ENCODE measurements at regions of chr5 and their contacts with region 1.

Region 1: DNA sequence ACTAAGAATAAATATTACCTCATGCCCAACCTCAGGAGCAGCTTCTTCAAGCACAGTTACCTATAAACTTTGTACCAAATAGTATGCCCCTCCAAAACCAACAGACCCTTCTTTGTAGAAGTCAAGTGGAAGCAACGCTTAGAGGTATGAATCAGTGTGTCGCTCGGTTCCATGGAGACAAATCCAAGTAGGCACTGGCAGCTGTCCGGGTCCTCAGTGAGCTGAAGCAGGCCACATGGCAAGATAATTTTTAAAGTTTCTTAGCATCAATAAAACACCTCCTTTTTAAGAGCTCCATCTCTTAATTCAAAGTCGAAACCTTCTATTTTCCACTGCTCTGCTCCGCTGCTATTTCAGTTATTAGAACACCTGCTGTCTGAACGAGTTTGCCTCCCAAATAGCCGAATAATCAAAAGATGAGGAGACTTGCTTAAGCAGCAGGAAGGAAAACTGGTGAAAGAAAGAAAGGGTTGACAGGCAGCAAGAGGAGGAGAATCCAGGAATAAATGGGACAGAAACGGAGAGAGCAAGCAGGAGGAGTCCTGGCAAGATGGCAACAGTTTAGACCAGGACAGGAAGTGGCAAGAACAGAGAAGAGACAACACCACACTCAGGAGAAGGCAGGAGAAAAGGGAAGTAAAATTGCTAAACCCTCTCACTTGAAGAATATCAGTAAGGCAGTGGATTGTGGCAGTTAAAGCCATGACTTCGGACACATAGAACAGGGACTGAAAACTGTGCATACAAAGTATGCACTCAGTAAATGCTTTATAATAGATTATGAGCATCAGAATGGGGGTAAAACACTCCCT is 65.0 kb downstream of the PPP2R2B start:
- DNase-seq: no peak
- H3K27ac ChIP-seq: no peak overlapping the region
- CTCF ChIP-seq: no peak

Region 2: DNA sequence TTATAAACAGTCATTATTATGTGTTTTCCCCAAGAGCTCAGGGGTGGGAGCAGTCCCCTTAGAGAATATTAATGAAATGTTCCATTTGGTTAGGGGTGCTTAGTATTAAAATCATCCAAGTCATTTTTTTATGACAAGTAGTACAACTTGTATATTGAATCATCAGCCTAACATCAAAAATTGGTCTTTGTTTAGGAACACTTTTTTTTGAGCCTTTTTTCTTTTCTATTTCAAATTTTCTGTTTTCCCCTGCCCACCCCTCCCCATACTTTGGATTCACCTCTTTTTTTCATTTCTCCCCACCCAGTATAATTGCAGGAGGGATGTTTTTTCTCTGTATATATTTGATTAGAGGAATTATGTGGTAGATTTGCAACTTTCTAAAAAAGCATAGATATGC is 584.3 kb before region 1 on chr5:
- CTCF ChIA-PET with region 1: interaction called, 11 read pairs
- POLR2A ChIA-PET with region 1: no interaction called
- DNase-seq: no peak
- H3K27ac ChIP-seq: no peak overlapping the region
- CTCF ChIP-seq: no peak

Region 3: GRCh38 chr5:146799671-146800070 is 13.9 kb before region 1 on chr5:
- CTCF ChIA-PET with region 1: no interaction called
- POLR2A ChIA-PET with region 1: interaction called, 10 read pairs
- DNase-seq: no peak
- H3K27ac ChIP-seq: no peak overlapping the region
- CTCF ChIP-seq: no peak

Region 4: GRCh38 chr5:146836226-146836842 is 22.8 kb after region 1 on chr5:
- CTCF ChIA-PET with region 1: no interaction called
- POLR2A ChIA-PET with region 1: no interaction called
- DNase-seq: no peak
- H3K27ac ChIP-seq: no peak overlapping the region
- CTCF ChIP-seq: no peak

Measured in RWPE1 (cell line).